ENCODE measurements at regions of chr16 and their contacts with region 1.

Region 1: GRCh38 chr16:69339289-69340108 is at the starts of genes COG8 and NIP7:
- DNase-seq: peak; percentile 97
- ATAC-seq: peak; percentile 97
- H3K4me3 ChIP-seq: peak within 1 kb of the TSS; percentile 83
- H3K27ac ChIP-seq: peak within 1 kb of the TSS; percentile 70
- H3K4me1 ChIP-seq: peaks cover 23% of the 10 kb centered on the region
- H3K27me3 ChIP-seq: no peaks in the 10 kb centered on the region
- CTCF ChIP-seq: peak; percentile 62
- total RNA-seq, gene COG8: 27.2 and 29.5 TPM in 2 replicates
- total RNA-seq, gene NIP7: 25.4 and 28.3 TPM in 2 replicates

Region 2: GRCh38 chr16:69310653-69311532 is 28.6 kb before region 1 on chr16 and contains the start of gene VPS4A:
- CTCF ChIA-PET with region 1: no interaction called
- POLR2A ChIA-PET with region 1: no interaction called
- intact Hi-C with region 1: loop called (anchors 1 kb)
- DNase-seq: peak; percentile 92
- ATAC-seq: peak; percentile 95
- H3K4me3 ChIP-seq: peak within 1 kb of the TSS; percentile 95
- H3K27ac ChIP-seq: peak within 1 kb of the TSS; percentile 20
- H3K4me1 ChIP-seq: no peaks in the 10 kb centered on the region
- H3K27me3 ChIP-seq: no peaks in the 10 kb centered on the region
- CTCF ChIP-seq: peak; percentile 58
- total RNA-seq, gene VPS4A: 27.3 and 28.1 TPM in 2 replicates

Region 3: GRCh38 chr16:69613378-69614154 is 274.1 kb after region 1 on chr16:
- CTCF ChIA-PET with region 1: no interaction called
- POLR2A ChIA-PET with region 1: no interaction called
- intact Hi-C with region 1: loop called (anchors 1 kb)
- DNase-seq: peak; percentile 67
- ATAC-seq: peak; percentile 97
- H3K4me3 ChIP-seq: no peak overlapping the region
- H3K27ac ChIP-seq: peak overlapping the region; percentile 52
- H3K4me1 ChIP-seq: peaks cover 17% of the 10 kb centered on the region
- H3K27me3 ChIP-seq: no peaks in the 10 kb centered on the region
- CTCF ChIP-seq: no peak

Measured in PC-3 (cell line).